Naive thymus-derived CD4-positive, alpha-beta T cell (primary cell): ENCODE measurements at regions of chr10 and their contacts with region 1.

Region 1: GRCh38 chr10:99845837-99846382 is 63.5 kb downstream of the ABCC2 start:
- DNase-seq: peak; percentile 22 to 78 (median 71)
- ATAC-seq: peak; percentile 94
- H3K4me3 ChIP-seq: no peak overlapping the region
- H3K4me3 Mint-ChIP-seq: peak overlapping the region in 9 of 10 donors; percentile 39 to 59 (median 50)
- H3K27ac ChIP-seq: no peak overlapping the region
- H3K27ac Mint-ChIP-seq: no peak overlapping the region
- H3K4me1 ChIP-seq: peaks cover 0 to 5% of the 10 kb centered on the region in 2 donors
- H3K4me1 Mint-ChIP-seq: peaks cover 0 to 8% (median 5%) of the 10 kb centered on the region in 7 donors
- H3K27me3 ChIP-seq: no peaks in the 10 kb centered on the region
- H3K27me3 Mint-ChIP-seq: peaks cover 0 to 3% (median 0%) of the 10 kb centered on the region in 5 donors

Region 2: DNA sequence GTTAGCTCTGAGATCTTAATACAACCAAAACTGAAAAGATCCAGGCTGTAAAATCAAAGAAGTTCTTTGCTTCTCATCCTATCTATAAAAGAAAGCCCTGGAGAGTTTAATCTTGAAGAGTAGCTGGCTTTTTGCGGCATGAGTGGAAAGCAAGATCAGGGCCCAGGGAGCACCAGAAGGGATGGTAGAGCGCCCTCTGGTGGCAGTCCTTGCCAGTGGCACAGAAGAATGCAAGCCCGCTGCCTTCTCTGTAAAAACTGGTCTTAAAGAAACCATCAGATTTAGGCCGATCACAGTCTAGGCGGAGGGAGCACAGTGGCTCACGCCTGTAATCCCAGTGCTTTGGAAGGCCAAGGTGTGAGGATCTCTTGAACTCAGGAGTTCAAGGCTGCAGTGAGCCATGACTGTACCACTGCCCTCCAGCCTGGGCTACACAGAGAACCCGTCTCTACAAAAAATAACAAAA is 200.1 kb after region 1 on chr10:
- CTCF ChIA-PET with region 1: interaction called, 77 read pairs
- POLR2A ChIA-PET with region 1: no interaction called
- intact Hi-C with region 1: loop called in 1 of 2 experiments (anchors 1 kb)
- DNase-seq: peak; percentile 38 to 80 (median 71)
- ATAC-seq: peak; percentile 86
- H3K4me3 ChIP-seq: no peak overlapping the region
- H3K4me3 Mint-ChIP-seq: no peak overlapping the region
- H3K27ac ChIP-seq: no peak overlapping the region
- H3K27ac Mint-ChIP-seq: peak overlapping the region in 2 of 9 donors; percentile 9 to 42
- H3K4me1 ChIP-seq: no peaks in the 10 kb centered on the region
- H3K4me1 Mint-ChIP-seq: peaks cover 0 to 6% (median 0%) of the 10 kb centered on the region in 7 donors
- H3K27me3 ChIP-seq: no peaks in the 10 kb centered on the region
- H3K27me3 Mint-ChIP-seq: peaks cover 0 to 13% (median 6%) of the 10 kb centered on the region in 5 donors

Region 3: DNA sequence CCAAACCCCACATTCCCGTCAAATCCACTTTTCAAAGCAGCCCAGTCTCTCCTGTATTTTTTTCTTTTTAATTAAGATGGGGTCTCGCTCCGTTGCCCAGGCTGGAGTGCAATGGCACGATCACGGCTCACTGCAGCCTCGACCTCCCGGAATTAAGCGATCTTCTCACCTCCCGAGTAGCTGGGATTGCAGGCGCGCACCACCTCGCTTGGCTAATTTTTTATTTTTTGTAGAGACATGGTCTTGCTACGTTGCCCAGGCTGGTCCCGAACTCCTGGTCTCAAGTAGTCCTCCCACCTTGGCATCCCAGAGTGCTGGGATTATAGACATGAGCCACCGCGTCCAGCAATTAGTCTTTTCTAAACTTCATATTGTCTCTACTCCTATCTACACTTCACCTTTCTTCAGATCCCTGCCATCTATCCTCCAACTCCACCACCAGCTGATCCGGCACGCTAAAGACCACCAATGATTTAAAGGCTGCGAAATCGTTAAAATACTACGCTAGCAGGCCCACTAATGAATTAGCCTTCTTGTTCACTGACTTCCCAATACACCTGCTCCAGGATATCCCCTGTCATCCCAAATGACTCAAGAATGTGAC is 384.0 kb after region 1 on chr10:
- CTCF ChIA-PET with region 1: no interaction called
- POLR2A ChIA-PET with region 1: no interaction called
- intact Hi-C with region 1: loop called in 1 of 2 experiments (anchors 10 kb)
- DNase-seq: no peak
- ATAC-seq: no peak
- H3K4me3 ChIP-seq: peak overlapping the region; percentile 99
- H3K4me3 Mint-ChIP-seq: peak overlapping the region; percentile 85 to 98 (median 91)
- H3K27ac ChIP-seq: peak overlapping the region; percentile 83
- H3K27ac Mint-ChIP-seq: peak overlapping the region; percentile 75 to 97 (median 85)
- H3K4me1 ChIP-seq: peaks cover 0 to 8% of the 10 kb centered on the region in 2 donors
- H3K4me1 Mint-ChIP-seq: peaks cover 16 to 44% (median 36%) of the 10 kb centered on the region in 7 donors
- H3K27me3 ChIP-seq: no peaks in the 10 kb centered on the region
- H3K27me3 Mint-ChIP-seq: no peaks in the 10 kb centered on the region

Region 4: DNA sequence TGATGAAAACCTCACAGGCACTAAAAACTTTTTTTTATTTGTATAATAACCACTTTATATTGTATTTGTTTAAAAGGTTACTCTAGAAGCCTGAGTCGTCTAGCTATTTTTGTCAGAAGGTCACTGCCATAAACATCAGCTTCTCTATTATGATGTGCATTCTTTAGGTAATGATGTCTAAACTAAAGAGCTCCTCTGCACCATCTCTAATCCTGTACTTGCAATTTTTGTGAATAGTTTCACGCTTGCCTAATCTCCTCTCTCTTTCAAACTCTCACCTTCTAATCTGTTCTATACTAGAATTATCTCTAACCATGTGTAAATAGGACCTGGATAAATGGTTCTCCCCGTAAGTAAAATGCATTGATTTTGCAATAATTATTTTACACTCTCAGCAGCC is 393.9 kb after region 1 on chr10:
- CTCF ChIA-PET with region 1: no interaction called
- POLR2A ChIA-PET with region 1: no interaction called
- intact Hi-C with region 1: loop called in 1 of 2 experiments (anchors 5 kb)
- DNase-seq: no peak
- ATAC-seq: no peak
- H3K4me3 ChIP-seq: no peak overlapping the region
- H3K4me3 Mint-ChIP-seq: no peak overlapping the region
- H3K27ac ChIP-seq: no peak overlapping the region
- H3K27ac Mint-ChIP-seq: no peak overlapping the region
- H3K4me1 ChIP-seq: no peaks in the 10 kb centered on the region
- H3K4me1 Mint-ChIP-seq: peaks cover 0 to 8% (median 0%) of the 10 kb centered on the region in 7 donors
- H3K27me3 ChIP-seq: no peaks in the 10 kb centered on the region
- H3K27me3 Mint-ChIP-seq: no peaks in the 10 kb centered on the region

Region 5: DNA sequence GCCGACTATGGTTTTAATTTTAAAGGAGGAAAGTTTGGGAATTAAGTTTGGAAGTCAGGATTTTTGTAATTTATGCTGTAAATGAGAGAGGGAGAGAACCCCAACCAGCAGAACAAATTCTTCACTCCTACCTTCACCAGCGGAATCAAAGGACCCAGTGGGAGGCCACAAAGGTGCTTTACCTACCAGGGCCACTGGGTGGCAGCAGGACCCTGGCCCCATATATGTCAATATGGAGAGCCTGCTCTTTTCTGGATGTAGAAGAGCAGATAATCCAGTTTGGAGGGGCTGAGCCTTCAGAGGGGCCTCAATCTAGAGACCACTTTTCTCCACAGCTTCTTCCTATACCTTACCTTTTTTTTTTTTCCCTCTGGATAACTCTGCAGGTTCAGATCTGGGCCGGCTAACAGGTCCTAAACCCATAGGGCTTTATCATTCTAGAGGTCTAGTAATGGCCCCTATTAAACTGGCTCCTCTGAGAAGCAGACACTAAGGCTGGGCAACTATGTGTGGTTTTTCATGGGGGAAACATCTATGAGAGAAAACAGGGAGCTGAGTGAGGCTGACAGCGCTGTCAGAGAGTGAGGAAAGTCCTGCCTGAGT is 492.6 kb after region 1 on chr10:
- CTCF ChIA-PET with region 1: no interaction called
- POLR2A ChIA-PET with region 1: no interaction called
- intact Hi-C with region 1: loop called in 1 of 2 experiments (anchors 5 kb)
- DNase-seq: peak; percentile 50 to 82 (median 74)
- ATAC-seq: peak; percentile 94
- H3K4me3 ChIP-seq: no peak overlapping the region
- H3K4me3 Mint-ChIP-seq: no peak overlapping the region
- H3K27ac ChIP-seq: no peak overlapping the region
- H3K27ac Mint-ChIP-seq: peak overlapping the region in 2 of 9 donors; percentile 69 to 82
- H3K4me1 ChIP-seq: no peaks in the 10 kb centered on the region
- H3K4me1 Mint-ChIP-seq: peaks cover 0 to 35% (median 0%) of the 10 kb centered on the region in 7 donors
- H3K27me3 ChIP-seq: no peaks in the 10 kb centered on the region
- H3K27me3 Mint-ChIP-seq: peaks cover 0 to 15% (median 0%) of the 10 kb centered on the region in 5 donors